OCI-LY7 (cell line): ENCODE measurements at regions of chr1 and their contacts with region 1.

Region 1: GRCh38 chr1:213844632-213845031 is 143.1 kb upstream of the PROX1 start:
- DNase-seq: no peak
- H3K4me3 ChIP-seq: no peak overlapping the region
- H3K27ac ChIP-seq: no peak overlapping the region
- H3K4me1 ChIP-seq: no peaks in the 10 kb centered on the region
- CTCF ChIP-seq: no peak

Region 2: DNA sequence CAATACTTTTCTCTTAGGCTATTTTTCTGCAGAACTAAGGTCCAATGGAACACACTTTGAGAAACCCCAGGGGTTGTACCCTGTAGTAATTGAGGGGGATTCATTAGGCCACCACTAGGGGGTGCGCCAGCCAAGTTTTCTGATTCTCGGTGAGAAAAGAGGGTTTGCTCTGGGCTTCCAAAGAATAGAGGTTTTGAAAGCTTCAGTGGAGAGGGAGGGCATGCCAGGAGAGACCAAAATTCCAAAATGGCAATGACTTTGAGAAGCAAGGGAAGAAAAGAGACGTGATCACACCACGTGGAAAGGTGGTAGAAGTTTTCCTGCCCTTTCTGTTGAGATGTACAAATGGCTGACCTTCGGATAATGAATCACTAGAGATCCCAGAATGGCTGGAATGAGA is 470.3 kb before region 1 on chr1:
- CTCF ChIA-PET with region 1: interaction called, 11 read pairs
- POLR2A ChIA-PET with region 1: no interaction called
- intact Hi-C with region 1: no loop called
- DNase-seq: peak; percentile 54
- H3K4me3 ChIP-seq: no peak overlapping the region
- H3K27ac ChIP-seq: no peak overlapping the region
- H3K4me1 ChIP-seq: no peaks in the 10 kb centered on the region
- CTCF ChIP-seq: peak; percentile 99

Region 3: DNA sequence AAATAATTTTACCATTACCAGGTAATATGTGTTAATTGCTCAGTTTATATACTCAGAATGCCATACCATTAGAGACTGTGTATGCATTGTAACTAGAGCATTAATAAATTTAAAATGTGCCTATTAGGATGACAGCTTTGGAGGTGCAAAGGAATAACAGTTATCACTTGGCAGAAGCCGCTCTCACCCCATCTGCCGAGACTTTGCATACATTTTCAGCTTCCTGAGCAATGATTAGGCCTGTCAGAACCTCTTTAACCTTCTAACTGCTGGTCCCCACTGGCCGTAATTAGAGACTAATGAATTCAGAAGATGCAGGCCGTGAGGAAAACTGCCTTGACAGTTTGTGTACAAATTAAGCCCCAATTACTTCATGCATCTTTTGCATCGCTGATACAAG is 14.9 kb before region 1 on chr1:
- CTCF ChIA-PET with region 1: no interaction called
- POLR2A ChIA-PET with region 1: no interaction called
- intact Hi-C with region 1: no loop called
- DNase-seq: no peak
- H3K4me3 ChIP-seq: no peak overlapping the region
- H3K27ac ChIP-seq: no peak overlapping the region
- H3K4me1 ChIP-seq: no peaks in the 10 kb centered on the region
- CTCF ChIP-seq: no peak